A549 (cell line): ENCODE measurements at regions of chr3 and their contacts with region 1.

Region 1: DNA sequence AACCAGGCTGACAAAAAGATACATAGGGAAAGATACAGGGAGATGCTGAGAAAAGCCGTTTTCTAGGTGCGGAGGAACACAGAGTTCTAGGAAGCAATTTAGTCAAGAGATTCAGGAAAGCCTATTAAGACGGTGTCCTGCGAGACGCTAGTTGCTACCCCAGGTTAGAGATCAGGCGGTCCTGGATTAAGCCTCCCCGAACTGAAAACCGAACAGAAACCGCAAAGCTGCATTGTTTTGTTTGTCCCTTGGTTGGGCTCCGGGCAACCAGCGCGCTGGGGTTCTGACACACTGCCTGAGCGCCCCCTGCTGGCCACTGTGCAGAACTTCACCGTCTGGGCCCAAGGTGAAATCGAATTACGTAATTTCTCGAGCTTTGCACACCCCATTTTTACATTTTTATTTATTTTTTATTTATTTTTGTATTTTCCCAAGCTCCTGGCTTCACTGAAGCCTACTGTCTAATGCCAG is 37.3 kb upstream of the NDUFB4 start:
- DNase-seq: peak; percentile 78 to 84
- ATAC-seq: peak; percentile 58 to 84
- H3K4me3 ChIP-seq: peak overlapping the region; percentile 54
- H3K27ac ChIP-seq: peak overlapping the region; percentile 61 to 76
- H3K4me1 ChIP-seq: peaks cover 12% of the 10 kb centered on the region
- CTCF ChIP-seq: peak; percentile 96
- EP300 ChIP-seq: no peak
- POLR2A ChIP-seq: no peak
- RAD21 ChIP-seq: peak; percentile 90 to 96

Region 2: GRCh38 chr3:120239644-120240043 is 319.2 kb before region 1 on chr3:
- CTCF ChIA-PET with region 1: interaction called, 65 read pairs
- POLR2A ChIA-PET with region 1: no interaction called
- DNase-seq: no peak
- ATAC-seq: no peak
- H3K4me3 ChIP-seq: no peak overlapping the region
- H3K27ac ChIP-seq: no peak overlapping the region
- H3K4me1 ChIP-seq: no peaks in the 10 kb centered on the region
- CTCF ChIP-seq: no peak
- EP300 ChIP-seq: no peak
- POLR2A ChIP-seq: no peak
- RAD21 ChIP-seq: no peak

Region 3: DNA sequence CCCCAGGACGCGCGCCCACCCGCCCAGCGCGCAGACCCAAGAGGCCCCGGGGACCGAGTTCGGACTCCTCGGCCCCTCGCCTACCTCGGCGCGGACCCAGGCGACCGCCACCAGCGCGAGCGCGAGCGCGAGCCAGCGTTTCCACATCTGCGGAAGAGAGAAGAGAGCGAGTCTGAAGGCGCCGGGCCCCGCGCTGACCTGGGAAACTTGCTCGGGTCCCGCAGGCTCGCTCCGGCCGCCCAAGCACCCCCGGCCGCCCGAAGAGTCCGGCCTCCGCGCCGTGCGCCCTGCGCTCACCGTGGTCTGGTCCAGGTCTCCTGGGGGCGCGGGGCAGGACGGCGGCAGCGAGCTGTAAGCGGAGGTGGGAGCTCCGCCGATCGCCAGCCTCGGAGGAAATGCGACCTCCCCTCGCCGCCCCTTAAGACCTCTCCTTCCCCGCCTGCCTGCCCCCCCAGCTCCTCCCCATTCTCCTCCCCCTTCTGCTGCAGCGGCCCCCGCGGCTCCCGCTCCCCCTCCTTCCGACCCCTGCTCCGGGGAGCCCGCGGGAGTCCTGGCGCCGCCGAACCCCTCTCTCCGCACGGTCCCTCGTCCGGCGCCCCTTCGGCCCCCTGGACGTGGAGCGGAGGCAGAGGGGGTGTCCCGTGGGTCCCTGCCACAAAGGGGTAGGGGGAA is 108.1 kb before region 1 on chr3 and contains the start of gene FSTL1:
- CTCF ChIA-PET with region 1: interaction called, 37 read pairs
- POLR2A ChIA-PET with region 1: interaction called, 3 read pairs
- DNase-seq: peak; percentile 32 to 41
- ATAC-seq: peak; percentile 74 to 78
- H3K4me3 ChIP-seq: peak within 1 kb of the TSS; percentile 81
- H3K27ac ChIP-seq: peak within 1 kb of the TSS; percentile 80 to 94
- H3K4me1 ChIP-seq: peaks cover 21% of the 10 kb centered on the region
- CTCF ChIP-seq: no peak
- EP300 ChIP-seq: no peak
- POLR2A ChIP-seq: peak; percentile 72
- RAD21 ChIP-seq: no peak
- polyA plus RNA-seq, gene FSTL1: 57.7 and 84.7 TPM in 2 replicates

Region 4: GRCh38 chr3:120524171-120524923 is 34.5 kb before region 1 on chr3:
- CTCF ChIA-PET with region 1: interaction called, 16 read pairs
- POLR2A ChIA-PET with region 1: no interaction called
- DNase-seq: no peak
- ATAC-seq: no peak
- H3K4me3 ChIP-seq: no peak overlapping the region
- H3K27ac ChIP-seq: no peak overlapping the region
- H3K4me1 ChIP-seq: no peaks in the 10 kb centered on the region
- CTCF ChIP-seq: no peak
- EP300 ChIP-seq: no peak
- POLR2A ChIP-seq: no peak
- RAD21 ChIP-seq: no peak

Region 5: DNA sequence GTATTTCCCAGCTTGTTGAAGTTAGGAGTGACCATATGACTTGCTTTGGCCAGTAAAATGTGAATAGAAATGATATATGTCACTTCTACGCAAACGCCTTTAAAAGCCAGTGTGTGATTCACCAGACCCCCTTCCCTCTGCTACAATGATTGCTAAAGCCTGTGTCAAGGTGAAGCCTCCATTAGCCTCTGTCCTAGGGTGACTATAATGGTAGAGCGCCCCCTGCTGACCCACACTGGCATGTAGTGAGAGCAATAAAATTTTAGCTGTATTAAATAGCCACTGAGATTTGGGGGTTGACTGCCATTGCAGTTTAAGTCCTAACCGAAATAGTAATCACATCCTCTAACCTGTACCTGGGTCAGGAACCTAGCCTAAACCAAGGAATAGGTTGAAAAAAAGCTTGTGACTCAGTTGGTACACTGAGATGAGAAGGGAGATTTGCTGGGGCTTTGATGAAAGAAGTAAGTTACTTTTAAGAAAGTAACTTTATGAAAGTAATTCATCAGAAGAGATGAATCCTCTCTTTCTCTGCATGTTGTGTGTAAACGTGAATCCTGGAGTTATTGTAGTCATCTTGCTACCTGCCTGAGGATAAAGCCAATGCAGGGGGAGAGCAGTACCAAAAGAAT is 236.3 kb after region 1 on chr3:
- CTCF ChIA-PET with region 1: interaction called, 28 read pairs
- POLR2A ChIA-PET with region 1: no interaction called
- DNase-seq: peak; percentile 33 to 75
- ATAC-seq: peak; percentile 84 to 92
- H3K4me3 ChIP-seq: no peak overlapping the region
- H3K27ac ChIP-seq: no peak overlapping the region
- H3K4me1 ChIP-seq: peaks cover 19% of the 10 kb centered on the region; the same call in 2 of the 3 replicates
- CTCF ChIP-seq: peak; percentile 88
- EP300 ChIP-seq: no peak
- POLR2A ChIP-seq: no peak
- RAD21 ChIP-seq: peak; percentile 86 to 95